HEK293 (cell line): ENCODE measurements at regions of chr20 and their contacts with region 1.

Region 1: DNA sequence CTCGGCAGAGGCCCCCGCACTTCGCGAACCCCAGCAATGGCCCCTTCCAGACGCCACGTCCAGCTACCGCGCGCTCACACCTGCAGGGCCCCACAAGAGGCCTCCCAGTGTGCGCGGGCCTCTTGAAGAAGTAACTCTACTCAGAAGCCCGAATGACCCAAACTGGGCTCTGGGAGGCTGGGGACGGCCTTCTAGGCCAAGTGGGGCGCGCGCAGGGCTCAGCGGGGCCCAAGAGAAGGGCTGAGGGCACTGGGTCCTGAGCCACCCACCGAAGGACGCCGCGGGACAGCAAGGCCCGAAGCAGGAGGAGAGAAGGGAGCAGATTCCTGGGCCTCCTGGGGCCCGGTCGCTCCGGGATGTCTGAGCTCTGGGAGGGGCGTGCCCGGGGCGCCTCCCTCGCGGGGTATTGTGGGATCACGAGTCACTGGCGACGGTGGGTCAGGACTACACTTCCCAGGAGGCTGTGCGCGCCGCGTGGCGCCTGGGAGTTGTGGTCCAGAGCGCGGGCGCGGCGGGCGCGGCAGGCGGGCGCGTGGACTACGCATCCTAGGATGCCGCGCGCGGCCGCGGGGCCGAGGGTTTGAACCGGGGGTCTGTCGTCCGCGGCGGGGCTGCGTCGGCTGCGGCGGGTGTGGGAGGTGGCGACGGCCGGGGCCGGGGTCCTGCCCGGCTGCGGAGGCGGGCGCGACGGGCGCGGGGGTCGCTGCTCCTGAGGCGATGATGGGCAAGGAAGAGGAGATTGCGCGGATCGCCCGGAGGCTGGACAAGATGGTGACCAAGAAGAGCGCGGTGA is at the start of gene TCEA2:
- H3K4me3 ChIP-seq: peak within 1 kb of the TSS; percentile 80
- H3K27ac ChIP-seq: peak within 1 kb of the TSS; percentile 79
- H3K4me1 ChIP-seq: no peaks in the 10 kb centered on the region
- CTCF ChIP-seq: no peak

Region 2: DNA sequence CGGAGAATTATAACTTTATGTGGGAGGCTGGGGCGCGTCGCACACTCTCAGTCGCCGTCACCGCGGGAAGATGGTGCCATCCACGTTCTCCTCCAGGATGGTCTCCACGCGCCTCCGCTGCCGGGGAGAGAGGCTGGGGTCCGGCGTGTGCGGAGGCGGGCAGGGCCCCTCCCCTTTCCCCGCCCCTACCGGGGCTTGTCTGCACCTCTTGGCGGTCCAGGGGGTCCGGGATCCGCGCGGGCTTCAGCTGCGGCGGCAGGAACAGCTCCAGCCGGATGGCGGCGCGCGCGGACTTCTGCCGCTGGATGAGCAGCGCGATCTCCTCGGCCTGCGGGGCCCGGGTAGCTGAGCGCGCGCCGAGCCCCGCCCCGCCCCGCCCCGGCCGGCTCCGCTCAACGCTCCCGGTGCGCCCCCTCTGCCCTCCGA is 20.6 kb after region 1 on chr20:
- CTCF ChIA-PET with region 1: interaction called, 4 read pairs
- POLR2A ChIA-PET with region 1: interaction called, 13 read pairs
- H3K4me3 ChIP-seq: peak overlapping the region; percentile 35
- H3K27ac ChIP-seq: no peak overlapping the region
- H3K4me1 ChIP-seq: peaks cover 6% of the 10 kb centered on the region
- CTCF ChIP-seq: peak; percentile 26